ENCODE measurements at regions of chr2 and their contacts with region 1.

Region 1: GRCh38 chr2:20642055-20642971 is 8.6 kb downstream of the HS1BP3 start:
- DNase-seq: no peak
- ATAC-seq: peak; percentile 96
- H3K4me3 ChIP-seq: no peak overlapping the region
- H3K27ac ChIP-seq: no peak overlapping the region
- H3K4me1 ChIP-seq: no peaks in the 10 kb centered on the region; the same call in 1 of the 2 replicates
- H3K27me3 ChIP-seq: no peaks in the 10 kb centered on the region
- CTCF ChIP-seq: peak; percentile 97

Region 2: GRCh38 chr2:20397811-20398447 is 244.4 kb before region 1 on chr2:
- CTCF ChIA-PET with region 1: interaction called, 3 read pairs
- POLR2A ChIA-PET with region 1: no interaction called
- in situ Hi-C with region 1: no loop called
- intact Hi-C with region 1: loop called (anchors 2 kb)
- DNase-seq: no peak
- ATAC-seq: no peak
- H3K4me3 ChIP-seq: no peak overlapping the region
- H3K27ac ChIP-seq: no peak overlapping the region
- H3K4me1 ChIP-seq: no peaks in the 10 kb centered on the region
- H3K27me3 ChIP-seq: no peaks in the 10 kb centered on the region
- CTCF ChIP-seq: no peak